Right cardiac atrium (tissue), 5 donors: ENCODE measurements at regions of chr16 and their contacts with region 1.

Region 1: GRCh38 chr16:77171745-77172635 is 19.0 kb upstream of the MON1B start:
- DNase-seq: no peak
- ATAC-seq: peak in 1 of 2 donors; percentile 74
- H3K4me3 ChIP-seq: no peak overlapping the region
- H3K27ac ChIP-seq: no peak overlapping the region
- H3K4me1 ChIP-seq: no peaks in the 10 kb centered on the region
- H3K27me3 ChIP-seq: no peaks in the 10 kb centered on the region

Region 2: GRCh38 chr16:75789237-75789636 is 1382.8 kb before region 1 on chr16:
- intact Hi-C with region 1: loop called in 3 of 4 experiments (anchors 5 kb)
- DNase-seq: no peak
- ATAC-seq: no peak
- H3K4me3 ChIP-seq: no peak overlapping the region
- H3K27ac ChIP-seq: no peak overlapping the region
- H3K4me1 ChIP-seq: no peaks in the 10 kb centered on the region
- H3K27me3 ChIP-seq: no peaks in the 10 kb centered on the region

Region 3: GRCh38 chr16:75794426-75794825 is 1377.6 kb before region 1 on chr16:
- intact Hi-C with region 1: loop called in 3 of 4 experiments (anchors 5 kb)
- DNase-seq: no peak
- ATAC-seq: no peak
- H3K4me3 ChIP-seq: no peak overlapping the region
- H3K27ac ChIP-seq: no peak overlapping the region
- H3K4me1 ChIP-seq: no peaks in the 10 kb centered on the region
- H3K27me3 ChIP-seq: no peaks in the 10 kb centered on the region

Region 4: DNA sequence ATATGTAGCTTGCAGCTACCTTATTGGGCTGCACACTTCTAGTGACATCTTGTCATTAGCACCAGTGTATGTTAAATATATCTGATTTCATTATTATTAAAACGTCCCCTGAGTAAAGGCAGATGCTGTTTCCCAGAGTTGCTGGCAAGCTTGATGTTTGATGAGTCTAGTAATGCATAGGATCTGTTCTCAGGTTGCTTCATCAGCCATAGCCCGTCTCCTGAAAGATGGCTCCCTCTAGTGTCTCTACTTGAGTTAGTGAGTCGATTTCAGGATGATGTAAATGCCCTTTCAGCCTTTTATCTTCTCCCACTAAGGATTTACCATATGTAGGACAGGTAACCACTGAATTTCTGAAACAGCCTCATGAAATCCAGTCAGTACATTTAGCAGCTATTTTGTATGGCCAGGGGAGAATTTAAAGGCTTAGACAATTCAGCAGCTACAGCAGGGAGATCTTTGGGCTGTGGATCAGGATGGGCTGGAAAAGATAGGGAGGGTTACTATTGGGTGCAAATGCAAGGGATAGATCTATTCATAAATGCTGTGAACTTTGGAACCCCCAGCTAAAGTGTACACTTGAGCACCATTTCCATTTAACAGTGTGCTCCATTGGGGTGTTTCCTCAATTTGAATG is 518.5 kb before region 1 on chr16:
- intact Hi-C with region 1: loop called in 1 of 4 experiments (anchors 10 kb)
- DNase-seq: no peak
- ATAC-seq: no peak
- H3K4me3 ChIP-seq: no peak overlapping the region
- H3K27ac ChIP-seq: no peak overlapping the region
- H3K4me1 ChIP-seq: no peaks in the 10 kb centered on the region
- H3K27me3 ChIP-seq: no peaks in the 10 kb centered on the region

Region 5: DNA sequence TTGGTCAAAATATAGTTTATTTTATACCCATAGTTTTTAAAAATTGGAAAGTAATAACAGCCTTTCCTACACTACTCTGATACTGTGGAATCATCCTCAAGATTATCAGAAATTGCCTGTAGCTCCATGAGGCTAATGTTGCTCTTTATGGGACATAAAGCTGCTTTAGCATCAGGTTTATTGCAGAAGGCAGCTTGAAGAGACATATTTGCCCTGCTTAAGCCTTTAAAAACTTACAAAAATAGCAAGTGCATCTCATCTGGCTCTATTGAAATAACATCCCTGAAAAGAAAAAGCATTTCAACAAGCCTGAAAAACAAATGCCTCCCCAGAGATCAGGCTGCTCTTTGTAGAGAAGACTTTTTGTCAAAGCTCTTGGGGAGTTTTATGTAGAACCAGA is 123.9 kb before region 1 on chr16:
- intact Hi-C with region 1: no loop called
- DNase-seq: no peak
- ATAC-seq: no peak
- H3K4me3 ChIP-seq: no peak overlapping the region
- H3K27ac ChIP-seq: no peak overlapping the region
- H3K4me1 ChIP-seq: no peaks in the 10 kb centered on the region
- H3K27me3 ChIP-seq: no peaks in the 10 kb centered on the region